ENCODE measurements at regions of chr13 and their contacts with region 1.

Region 1: GRCh38 chr13:67224148-67224846 is 5.8 kb downstream of the PCDH9 start:
- DNase-seq: peak; percentile 67
- H3K4me3 Mint-ChIP-seq: no peak overlapping the region
- H3K27ac Mint-ChIP-seq: no peak overlapping the region
- H3K4me1 Mint-ChIP-seq: peaks cover 9% of the 10 kb centered on the region
- H3K27me3 Mint-ChIP-seq: peaks cover 24% of the 10 kb centered on the region

Region 2: DNA sequence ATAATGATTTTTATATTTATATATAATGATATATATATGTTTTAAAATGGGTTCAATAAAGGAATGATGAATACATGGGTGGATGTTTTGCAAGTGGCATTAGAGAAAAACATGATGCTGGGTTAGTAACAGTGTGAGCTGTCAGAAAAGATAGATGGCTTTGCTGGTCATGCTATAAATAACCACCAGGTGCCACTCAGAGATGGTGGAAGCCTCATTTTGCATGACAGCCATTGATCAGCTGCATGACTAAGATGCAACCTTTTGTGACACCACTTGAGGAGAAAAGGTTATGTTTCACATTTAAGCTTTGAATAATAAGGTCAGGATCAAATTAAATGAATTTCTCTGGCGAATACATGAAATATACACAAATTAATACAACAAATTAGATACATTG is 731.8 kb before region 1 on chr13:
- CTCF ChIA-PET with region 1: no interaction called
- intact Hi-C with region 1: loop called (anchors 2 kb)
- DNase-seq: no peak
- H3K4me3 Mint-ChIP-seq: no peak overlapping the region
- H3K27ac Mint-ChIP-seq: no peak overlapping the region
- H3K4me1 Mint-ChIP-seq: no peaks in the 10 kb centered on the region
- H3K27me3 Mint-ChIP-seq: no peaks in the 10 kb centered on the region

Region 3: GRCh38 chr13:66618702-66619101 is 605.6 kb before region 1 on chr13:
- CTCF ChIA-PET with region 1: no interaction called
- intact Hi-C with region 1: loop called (anchors 5 kb)
- DNase-seq: no peak
- H3K4me3 Mint-ChIP-seq: no peak overlapping the region
- H3K27ac Mint-ChIP-seq: no peak overlapping the region
- H3K4me1 Mint-ChIP-seq: no peaks in the 10 kb centered on the region
- H3K27me3 Mint-ChIP-seq: no peaks in the 10 kb centered on the region

Region 4: DNA sequence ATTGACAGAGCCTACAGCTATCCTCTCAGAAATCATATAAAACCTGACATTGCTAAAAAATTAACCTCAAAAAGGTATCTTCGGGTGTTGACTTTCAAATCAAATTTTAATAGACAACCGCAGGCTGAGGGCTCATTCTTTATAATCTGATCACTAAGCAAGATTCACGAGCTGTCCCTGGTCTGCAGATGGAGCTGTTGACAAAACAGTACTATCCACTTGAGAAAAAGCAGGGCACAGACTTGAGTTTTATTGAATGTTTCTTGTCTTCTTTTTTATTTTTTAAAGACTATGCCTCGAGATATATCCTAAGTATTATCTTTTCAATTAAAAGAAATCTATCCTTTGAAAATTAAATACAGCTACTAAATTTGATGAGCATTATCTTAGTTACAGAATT is 534.7 kb before region 1 on chr13:
- CTCF ChIA-PET with region 1: no interaction called
- intact Hi-C with region 1: loop called (anchors 5 kb)
- DNase-seq: no peak
- H3K4me3 Mint-ChIP-seq: no peak overlapping the region
- H3K27ac Mint-ChIP-seq: no peak overlapping the region
- H3K4me1 Mint-ChIP-seq: no peaks in the 10 kb centered on the region
- H3K27me3 Mint-ChIP-seq: no peaks in the 10 kb centered on the region

Region 5: DNA sequence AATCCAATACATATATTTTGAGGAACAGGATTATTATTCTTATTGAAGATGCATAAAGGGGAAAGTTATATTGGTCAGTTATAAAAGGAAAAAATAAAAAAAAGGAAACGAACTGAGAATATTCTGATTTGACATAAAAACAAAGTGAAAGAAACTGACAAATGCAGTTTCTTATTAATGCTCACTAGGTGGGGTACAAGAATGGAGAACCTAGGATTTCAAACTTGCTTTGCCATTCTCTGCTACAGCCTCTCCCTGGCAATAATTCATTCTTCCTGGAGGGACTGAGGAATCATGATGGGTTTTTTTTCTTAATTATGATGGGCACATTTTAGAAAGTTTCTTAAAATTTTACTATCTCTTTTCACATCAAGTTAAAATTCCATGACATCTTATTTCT is 149.1 kb before region 1 on chr13:
- CTCF ChIA-PET with region 1: interaction called, 3 read pairs
- intact Hi-C with region 1: loop called (anchors 10 kb)
- DNase-seq: no peak
- H3K4me3 Mint-ChIP-seq: no peak overlapping the region
- H3K27ac Mint-ChIP-seq: no peak overlapping the region
- H3K4me1 Mint-ChIP-seq: no peaks in the 10 kb centered on the region
- H3K27me3 Mint-ChIP-seq: no peaks in the 10 kb centered on the region

Measured in activated naive CD4-positive, alpha-beta T cell treated with anti-CD3 and anti-CD28 coated beads for 36 hours (primary cell).